Ascending aorta (tissue), 2 donors: ENCODE measurements at regions of chr18 and their contacts with region 1.

Region 1: GRCh38 chr18:35407871-35408481 is 30.8 kb upstream of the ZNF396 start:
- DNase-seq: no peak
- H3K4me3 ChIP-seq: no peak overlapping the region
- H3K27ac ChIP-seq: no peak overlapping the region
- H3K4me1 ChIP-seq: no peaks in the 10 kb centered on the region
- H3K27me3 ChIP-seq: no peaks in the 10 kb centered on the region
- CTCF ChIP-seq: peak; percentile 47 to 73 (median 68)

Region 2: GRCh38 chr18:35580701-35581539 is 172.9 kb after region 1 on chr18:
- intact Hi-C with region 1: loop called (anchors 5 kb)
- DNase-seq: peak in 1 of 2 donors; percentile 72
- H3K4me3 ChIP-seq: peak overlapping the region; percentile 84 to 86
- H3K27ac ChIP-seq: peak overlapping the region; percentile 93 to 100
- H3K4me1 ChIP-seq: peaks cover 0 to 8% of the 10 kb centered on the region in 2 donors
- H3K27me3 ChIP-seq: no peaks in the 10 kb centered on the region
- CTCF ChIP-seq: no peak